ENCODE measurements at regions of chrX and their contacts with region 1.

Region 1: DNA sequence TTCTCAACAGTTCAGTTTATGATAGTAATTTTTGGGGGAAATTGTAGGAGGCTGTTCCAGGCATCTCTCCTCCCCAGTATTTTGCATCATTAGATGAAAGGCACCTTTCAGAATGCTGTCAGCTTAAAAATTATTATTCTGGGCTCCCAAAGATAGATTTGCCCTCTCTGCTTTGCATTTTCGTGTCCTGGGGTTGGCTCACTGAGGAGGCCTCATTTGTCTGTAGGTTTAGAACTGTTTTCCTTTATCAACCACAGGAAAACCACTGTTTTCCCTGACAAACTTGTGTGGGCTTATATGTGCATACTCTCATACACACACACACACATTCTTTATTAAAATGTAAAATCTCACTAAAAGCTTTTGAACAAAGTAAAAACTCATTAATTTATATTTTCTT is 197.2 kb upstream of the VCX3A start:
- DNase-seq: no peak
- H3K4me3 ChIP-seq: no peak overlapping the region
- H3K27me3 ChIP-seq: no peaks in the 10 kb centered on the region
- CTCF ChIP-seq: no peak

Region 2: DNA sequence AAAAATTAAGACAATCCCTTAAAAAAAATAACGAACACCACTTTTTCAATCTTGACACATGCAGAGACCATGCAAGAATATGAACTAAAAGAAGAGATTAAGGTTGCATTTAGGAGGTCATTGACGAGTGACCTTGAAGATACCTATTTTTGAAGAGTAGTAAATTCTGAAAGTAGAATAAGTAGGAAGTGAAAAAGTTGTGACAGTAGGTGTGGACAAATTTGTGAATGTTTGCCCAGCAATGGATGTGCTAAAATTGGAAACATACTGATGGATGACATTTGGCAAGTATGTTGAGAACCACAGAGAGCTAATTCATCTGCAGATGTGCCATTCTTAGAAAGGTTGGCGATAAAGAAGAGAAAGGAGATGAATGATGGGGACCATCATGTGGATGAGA is 16.5 kb after region 1 on chrX:
- CTCF ChIA-PET with region 1: no interaction called
- POLR2A ChIA-PET with region 1: interaction called, 12 read pairs
- DNase-seq: no peak
- H3K4me3 ChIP-seq: no peak overlapping the region
- H3K27me3 ChIP-seq: no peaks in the 10 kb centered on the region
- CTCF ChIP-seq: no peak

Measured in BJ (cell line).